A549 (cell line): ENCODE measurements at regions of chr9 and their contacts with region 1.

Region 1: DNA sequence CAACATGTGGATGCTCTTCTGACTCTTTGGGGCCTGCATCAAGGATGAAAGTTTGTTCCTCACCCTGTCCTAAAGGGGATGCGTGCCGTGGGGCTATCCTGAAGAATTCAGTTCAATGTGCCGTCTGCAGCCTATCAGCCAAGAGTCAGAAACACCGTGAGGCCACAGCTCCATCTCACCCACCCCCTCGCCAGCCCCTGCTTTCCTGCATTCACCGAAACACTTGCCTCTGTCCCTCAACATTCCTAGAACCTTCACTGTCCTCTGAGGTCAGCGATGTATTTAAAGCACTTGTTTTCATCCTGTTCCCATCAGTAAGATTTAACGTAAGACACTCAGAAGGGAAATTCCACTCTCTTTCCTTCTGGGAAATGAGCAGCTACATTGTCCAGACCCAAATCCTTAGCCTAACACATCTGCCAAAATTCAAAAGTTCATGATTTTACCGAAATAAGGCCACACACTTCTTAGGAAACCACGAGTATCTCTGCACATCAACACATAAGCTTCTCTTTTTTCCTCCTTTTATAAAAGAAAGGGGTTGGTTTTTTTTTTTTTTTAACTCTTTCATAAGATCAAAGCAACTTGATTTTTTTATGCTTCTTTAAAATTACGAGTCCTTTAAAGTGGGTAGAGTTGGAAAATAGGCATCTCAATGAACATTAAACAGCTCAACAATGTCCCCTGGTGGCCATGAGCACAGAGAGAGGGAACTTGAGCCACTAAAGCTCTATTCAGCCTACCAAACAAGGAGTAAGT is 100.7 kb downstream of the SUSD1 start:
- DNase-seq: peak in 1 of 2 experiments; percentile 77
- ATAC-seq: peak; percentile 75 to 90; a peak in 5 of 6 replicates
- H3K4me3 ChIP-seq: no peak overlapping the region
- H3K27ac ChIP-seq: peak overlapping the region; percentile 65 to 86
- H3K4me1 ChIP-seq: peaks cover 31% of the 10 kb centered on the region
- CTCF ChIP-seq: peak; percentile 98
- EP300 ChIP-seq: peak in 1 of 2 experiments; percentile 71; a peak in 3 of 5 replicates
- POLR2A ChIP-seq: no peak
- RAD21 ChIP-seq: peak; percentile 99

Region 2: DNA sequence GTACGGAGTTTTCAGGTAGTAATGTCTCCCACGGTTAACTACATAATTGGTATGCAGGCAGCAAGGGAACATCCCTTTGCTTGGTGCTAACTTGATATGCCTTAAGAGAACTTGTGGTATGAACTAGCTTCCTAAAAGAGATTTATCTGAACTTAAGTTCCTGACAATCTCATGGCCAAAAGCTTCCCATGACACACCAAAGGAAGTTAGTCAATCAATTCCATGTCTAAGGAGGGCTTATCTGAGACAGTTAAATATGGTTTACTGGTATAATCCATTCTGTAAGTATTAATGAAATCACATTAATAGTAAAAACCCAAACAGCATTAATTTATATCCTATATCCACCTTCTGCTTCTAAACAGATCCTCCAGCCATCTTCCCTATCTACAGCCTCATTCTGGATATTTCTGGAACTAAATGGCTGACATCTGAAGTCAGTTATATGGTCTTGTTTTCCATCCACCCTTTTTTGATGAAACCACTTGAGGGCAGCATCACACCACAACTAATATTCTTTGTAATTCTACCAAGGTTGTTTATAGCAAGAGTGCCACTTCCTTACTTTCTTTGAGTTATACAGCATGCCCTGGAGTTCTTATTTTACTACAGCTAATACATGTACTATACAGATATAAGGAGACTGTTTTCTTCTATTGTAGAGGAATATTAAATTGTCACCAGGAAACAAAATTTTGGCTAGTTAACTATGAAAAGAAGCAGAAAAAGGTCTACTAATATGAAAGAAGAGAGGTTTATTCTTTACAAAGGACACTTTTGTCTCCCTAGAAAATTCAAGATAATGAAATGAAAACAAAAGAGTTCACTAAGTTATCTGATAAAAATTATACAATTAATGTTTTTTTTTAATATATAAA is 314.4 kb before region 1 on chr9:
- CTCF ChIA-PET with region 1: interaction called, 131 read pairs
- POLR2A ChIA-PET with region 1: interaction called, 5 read pairs
- DNase-seq: peak; percentile 41 to 84
- ATAC-seq: peak; percentile 93
- H3K4me3 ChIP-seq: no peak overlapping the region
- H3K27ac ChIP-seq: peak overlapping the region; percentile 5 to 22; a peak in 5 of 6 replicates
- H3K4me1 ChIP-seq: no peaks in the 10 kb centered on the region; the same call in 2 of the 3 replicates
- CTCF ChIP-seq: peak; percentile 88
- EP300 ChIP-seq: no peak
- POLR2A ChIP-seq: no peak
- RAD21 ChIP-seq: peak; percentile 97 to 98

Region 3: DNA sequence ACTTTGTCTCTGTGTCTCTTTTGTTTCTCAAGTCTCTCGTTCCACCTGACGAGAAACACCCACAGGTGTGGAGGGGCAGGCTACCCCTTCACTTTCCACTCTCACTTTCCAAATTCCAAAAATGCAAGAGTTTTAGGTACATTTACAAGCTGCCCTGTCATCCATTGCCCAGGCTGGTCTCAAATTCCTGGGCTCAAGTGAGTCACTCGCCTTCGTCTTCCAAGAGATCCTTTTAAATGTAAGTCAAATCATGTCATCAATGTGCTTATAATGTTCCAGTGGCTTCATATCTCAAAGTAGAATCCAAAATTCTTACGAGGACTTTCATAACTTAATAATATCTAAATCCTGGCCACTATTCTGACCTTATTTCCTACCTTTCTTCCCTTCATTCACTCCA is 198.2 kb before region 1 on chr9:
- CTCF ChIA-PET with region 1: no interaction called
- POLR2A ChIA-PET with region 1: no interaction called
- DNase-seq: no peak
- ATAC-seq: no peak
- H3K4me3 ChIP-seq: no peak overlapping the region
- H3K27ac ChIP-seq: no peak overlapping the region
- H3K4me1 ChIP-seq: no peaks in the 10 kb centered on the region
- CTCF ChIP-seq: no peak
- EP300 ChIP-seq: no peak
- POLR2A ChIP-seq: no peak
- RAD21 ChIP-seq: no peak

Region 4: DNA sequence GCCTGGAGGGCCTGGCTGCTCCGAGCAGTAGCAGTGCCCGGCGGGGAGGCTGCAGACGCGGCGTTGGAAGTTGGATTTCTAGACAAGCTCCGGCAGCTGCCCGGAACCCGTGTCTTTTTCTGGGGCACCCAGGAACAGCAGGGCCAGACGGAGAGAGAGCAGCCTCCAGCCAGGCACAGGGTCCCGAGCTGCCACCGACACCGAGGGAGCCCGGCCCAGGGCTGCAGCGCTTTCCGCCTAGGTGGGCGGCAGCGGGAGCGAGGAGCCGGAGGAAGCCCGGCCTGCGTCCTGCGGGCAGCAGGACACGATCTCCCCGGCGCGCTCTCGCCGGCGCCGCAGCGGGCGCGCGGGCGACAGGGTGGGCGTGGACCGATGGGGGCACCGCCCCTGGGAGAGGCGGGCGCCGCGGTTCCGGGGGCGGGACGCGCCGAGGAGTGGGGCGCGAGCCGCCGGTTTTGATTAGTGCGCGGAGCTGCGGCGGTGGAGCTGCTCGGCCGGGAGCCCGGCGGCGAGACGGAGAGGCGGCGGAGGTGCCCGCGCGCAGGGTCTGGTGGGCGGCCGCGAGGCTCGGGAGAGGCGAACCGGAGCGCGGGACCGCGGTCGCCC is 178.0 kb before region 1 on chr9 and contains the start of gene UGCG:
- CTCF ChIA-PET with region 1: interaction called, 13 read pairs
- POLR2A ChIA-PET with region 1: interaction called, 24 read pairs
- DNase-seq: peak; percentile 79 to 90
- ATAC-seq: peak; percentile 90 to 93
- H3K4me3 ChIP-seq: peak within 1 kb of the TSS; percentile 92
- H3K27ac ChIP-seq: peak within 1 kb of the TSS; percentile 87 to 97
- H3K4me1 ChIP-seq: peaks cover 46% of the 10 kb centered on the region
- CTCF ChIP-seq: no peak
- EP300 ChIP-seq: no peak
- POLR2A ChIP-seq: peak; percentile 97
- RAD21 ChIP-seq: 0 out of 5 replicates have a peak, but pooled peaks of 1 of the 2 experiments have one; percentile 12
- polyA plus RNA-seq, gene UGCG: 16.7 and 25.9 TPM in 2 replicates

Region 5: DNA sequence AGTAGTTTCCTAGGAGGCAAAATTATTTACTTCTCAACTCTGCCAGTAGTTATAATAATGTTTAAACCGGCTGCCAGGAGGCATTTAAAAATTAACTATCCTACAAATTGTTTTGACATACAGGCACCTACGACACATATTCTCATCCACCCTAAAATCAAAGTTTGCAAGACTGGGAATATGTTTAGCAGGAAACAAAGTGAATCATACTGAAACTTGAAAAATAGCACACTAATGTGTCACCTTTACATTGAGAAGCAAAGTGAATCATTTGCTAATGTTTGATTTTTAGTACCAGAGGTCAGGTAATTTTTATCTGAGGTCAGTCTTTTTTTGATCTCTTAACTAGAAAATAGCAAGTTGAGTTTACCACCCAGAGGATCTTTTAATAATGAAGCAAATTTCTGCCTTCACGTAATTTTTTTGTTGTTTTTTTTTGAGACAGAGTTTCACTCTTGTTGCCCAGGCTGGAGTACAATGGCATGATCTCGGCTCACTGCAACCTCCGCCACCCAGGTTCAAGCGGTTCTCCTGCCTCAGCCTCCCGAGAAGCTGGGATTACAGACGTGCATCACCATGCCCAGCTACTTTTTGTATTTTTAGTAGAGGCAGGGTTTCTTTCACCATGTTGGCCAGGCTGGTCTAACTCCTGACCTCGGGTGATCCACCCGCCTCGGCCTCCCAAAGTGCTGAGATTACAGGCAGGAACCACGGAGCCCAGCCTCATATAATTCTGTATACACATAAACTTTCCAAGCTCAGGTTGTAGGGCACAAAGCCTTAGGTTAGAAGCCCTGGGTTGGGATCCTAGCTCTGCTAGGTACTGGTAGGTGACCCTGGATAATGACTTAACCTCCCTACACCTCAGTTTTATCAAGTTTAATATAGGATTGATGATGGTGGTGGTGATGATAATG is 53.5 kb before region 1 on chr9:
- CTCF ChIA-PET with region 1: interaction called, 40 read pairs
- POLR2A ChIA-PET with region 1: interaction called, 5 read pairs
- DNase-seq: peak; percentile 77 to 86
- ATAC-seq: peak; percentile 89 to 96
- H3K4me3 ChIP-seq: no peak overlapping the region
- H3K27ac ChIP-seq: peak overlapping the region; percentile 71 to 89
- H3K4me1 ChIP-seq: peaks cover 24% of the 10 kb centered on the region
- CTCF ChIP-seq: no peak
- EP300 ChIP-seq: peak; percentile 77 to 82; a peak in 4 of 5 replicates
- POLR2A ChIP-seq: no peak
- RAD21 ChIP-seq: peak; percentile 29 to 59; a peak in 4 of 5 replicates

Region 6: GRCh38 chr9:112050544-112051475 is 23.6 kb before region 1 on chr9:
- CTCF ChIA-PET with region 1: interaction called, 21 read pairs
- POLR2A ChIA-PET with region 1: no interaction called
- DNase-seq: peak in 1 of 2 experiments; percentile 42
- ATAC-seq: peak; percentile 64 to 80; a peak in 4 of 6 replicates
- H3K4me3 ChIP-seq: no peak overlapping the region
- H3K27ac ChIP-seq: peak overlapping the region; percentile 30 to 77; a peak in 5 of 6 replicates
- H3K4me1 ChIP-seq: peaks cover 33% of the 10 kb centered on the region
- CTCF ChIP-seq: no peak
- EP300 ChIP-seq: peak in 1 of 2 experiments; percentile 55; a peak in 1 of 5 replicates
- POLR2A ChIP-seq: no peak
- RAD21 ChIP-seq: no peak

Region 7: DNA sequence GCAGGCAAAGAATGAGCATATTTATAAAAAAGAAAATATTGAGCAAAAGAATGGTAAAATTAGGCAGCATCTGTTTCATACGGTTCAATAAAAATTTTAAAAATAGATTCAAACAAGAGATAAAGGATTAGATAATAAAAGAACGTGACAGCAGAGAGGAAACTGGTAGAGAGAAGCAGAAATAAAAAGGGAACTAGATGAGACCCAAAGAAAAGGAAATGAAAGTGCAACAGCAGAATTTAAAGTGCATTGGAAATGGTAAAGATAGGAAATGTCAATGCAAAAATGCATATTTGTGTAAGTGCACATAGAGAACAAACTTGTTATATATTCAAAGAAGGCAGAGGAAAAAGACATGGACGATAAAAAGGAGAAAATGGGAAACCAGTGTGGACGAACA is 30.5 kb after region 1 on chr9:
- CTCF ChIA-PET with region 1: no interaction called
- POLR2A ChIA-PET with region 1: no interaction called
- DNase-seq: no peak
- ATAC-seq: no peak
- H3K4me3 ChIP-seq: no peak overlapping the region
- H3K27ac ChIP-seq: no peak overlapping the region
- H3K4me1 ChIP-seq: peaks cover 12% of the 10 kb centered on the region
- CTCF ChIP-seq: no peak
- EP300 ChIP-seq: no peak
- POLR2A ChIP-seq: no peak
- RAD21 ChIP-seq: no peak

Region 8: GRCh38 chr9:112241516-112241915 is 167.1 kb after region 1 on chr9:
- CTCF ChIA-PET with region 1: no interaction called
- POLR2A ChIA-PET with region 1: no interaction called
- DNase-seq: no peak
- ATAC-seq: no peak
- H3K4me3 ChIP-seq: no peak overlapping the region
- H3K27ac ChIP-seq: no peak overlapping the region
- H3K4me1 ChIP-seq: peaks cover 9% of the 10 kb centered on the region
- CTCF ChIP-seq: no peak
- EP300 ChIP-seq: no peak
- POLR2A ChIP-seq: no peak
- RAD21 ChIP-seq: no peak

Region 9: GRCh38 chr9:112361601-112362000 is 287.2 kb after region 1 on chr9:
- CTCF ChIA-PET with region 1: interaction called, 17 read pairs
- POLR2A ChIA-PET with region 1: no interaction called
- DNase-seq: peak in 1 of 2 experiments; percentile 60
- ATAC-seq: peak; percentile 59 to 75; a peak in 4 of 6 replicates
- H3K4me3 ChIP-seq: no peak overlapping the region
- H3K27ac ChIP-seq: no peak overlapping the region
- H3K4me1 ChIP-seq: peaks cover 13% of the 10 kb centered on the region
- CTCF ChIP-seq: peak; percentile 67
- EP300 ChIP-seq: no peak
- POLR2A ChIP-seq: no peak
- RAD21 ChIP-seq: peak; percentile 77 to 85